ENCODE measurements at regions of chr11 and their contacts with region 1.

Region 1: DNA sequence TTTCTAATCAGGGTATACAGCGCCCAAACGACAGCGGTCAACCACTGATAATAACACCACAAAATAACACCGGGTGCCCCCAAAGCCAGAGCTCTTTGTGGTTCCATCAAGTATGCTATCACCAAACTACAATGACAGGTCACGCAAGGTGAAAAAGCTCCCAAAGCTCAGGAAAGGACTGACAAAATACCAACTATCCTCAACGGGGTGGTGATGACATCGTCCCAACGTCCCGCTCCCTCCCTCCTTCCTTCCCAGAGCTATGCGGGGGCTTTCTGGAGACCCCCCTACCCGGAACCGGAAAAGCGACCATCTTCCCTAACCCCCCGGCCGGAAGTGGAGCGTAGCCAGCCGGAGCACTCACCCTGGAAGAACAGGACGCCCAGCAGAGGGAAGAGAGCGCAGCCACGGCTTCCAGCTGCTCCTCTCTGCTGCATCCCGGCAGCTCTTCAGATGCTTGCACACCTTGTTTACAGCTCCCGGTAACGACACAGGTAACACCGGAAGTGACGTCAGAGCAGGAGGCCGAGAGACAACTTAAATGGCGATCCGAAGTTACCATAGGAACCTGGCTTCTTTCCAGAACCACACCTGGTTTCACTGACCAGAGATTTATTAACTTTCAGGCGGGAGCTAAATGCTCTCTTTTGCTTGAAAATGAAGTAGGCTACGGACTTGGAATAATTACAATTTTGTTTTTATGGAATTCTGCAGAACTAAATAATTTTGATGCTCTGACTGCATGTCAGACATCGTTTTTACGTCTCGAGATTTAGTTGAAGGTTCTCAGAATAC is at the start of gene MPZL3:
- DNase-seq: peak; percentile 64 to 96 (median 91)
- ATAC-seq: peak; percentile 79 to 88
- H3K4me3 Mint-ChIP-seq: peak within 1 kb of the TSS; percentile 95 to 99 (median 98)
- H3K27ac Mint-ChIP-seq: peak within 1 kb of the TSS; percentile 99 to 100 (median 100)
- H3K4me1 Mint-ChIP-seq: peaks cover 14 to 44% (median 35%) of the 10 kb centered on the region in 4 donors
- H3K27me3 Mint-ChIP-seq: peaks cover 0 to 3% (median 0%) of the 10 kb centered on the region in 5 donors
- polyA plus RNA-seq, gene MPZL3: 1.9 to 3.4 (median 3.2) TPM

Region 2: GRCh38 chr11:118142809-118143208 is 109.2 kb before region 1 on chr11:
- POLR2A ChIA-PET with region 1: no interaction called
- DNase-seq: no peak
- ATAC-seq: no peak
- H3K4me3 Mint-ChIP-seq: no peak overlapping the region
- H3K27ac Mint-ChIP-seq: peak overlapping the region in 1 of 10 donors; percentile 84
- H3K4me1 Mint-ChIP-seq: peaks cover 0 to 4% (median 3%) of the 10 kb centered on the region in 4 donors
- H3K27me3 Mint-ChIP-seq: peaks cover 31 to 68% (median 58%) of the 10 kb centered on the region in 5 donors

Region 3: GRCh38 chr11:118240999-118241768 is 10.9 kb before region 1 on chr11:
- POLR2A ChIA-PET with region 1: interaction called, 14 read pairs
- DNase-seq: peak in 6 of 10 donors; percentile 27 to 70 (median 41)
- ATAC-seq: peak; percentile 92 to 94
- H3K4me3 Mint-ChIP-seq: peak overlapping the region; percentile 4 to 82 (median 64)
- H3K27ac Mint-ChIP-seq: peak overlapping the region; percentile 4 to 93 (median 75)
- H3K4me1 Mint-ChIP-seq: peaks cover 42 to 85% (median 73%) of the 10 kb centered on the region in 4 donors
- H3K27me3 Mint-ChIP-seq: no peaks in the 10 kb centered on the region